Activated T-helper 1 cell treated with anti-CD3 and anti-CD28 coated beads, Interleukin-12 subunit alpha, Interleukin-12 subunit beta, Interleukin-2, Interleukin-4 antibody, amounts not matched to agents 30 ng/mL and 10 ng/mL and 1 ng/mL, durations not matched to agents 14 hours and 24 hours and 36 hours (primary cell): ENCODE measurements at regions of chr10 and their contacts with region 1.

Region 1: DNA sequence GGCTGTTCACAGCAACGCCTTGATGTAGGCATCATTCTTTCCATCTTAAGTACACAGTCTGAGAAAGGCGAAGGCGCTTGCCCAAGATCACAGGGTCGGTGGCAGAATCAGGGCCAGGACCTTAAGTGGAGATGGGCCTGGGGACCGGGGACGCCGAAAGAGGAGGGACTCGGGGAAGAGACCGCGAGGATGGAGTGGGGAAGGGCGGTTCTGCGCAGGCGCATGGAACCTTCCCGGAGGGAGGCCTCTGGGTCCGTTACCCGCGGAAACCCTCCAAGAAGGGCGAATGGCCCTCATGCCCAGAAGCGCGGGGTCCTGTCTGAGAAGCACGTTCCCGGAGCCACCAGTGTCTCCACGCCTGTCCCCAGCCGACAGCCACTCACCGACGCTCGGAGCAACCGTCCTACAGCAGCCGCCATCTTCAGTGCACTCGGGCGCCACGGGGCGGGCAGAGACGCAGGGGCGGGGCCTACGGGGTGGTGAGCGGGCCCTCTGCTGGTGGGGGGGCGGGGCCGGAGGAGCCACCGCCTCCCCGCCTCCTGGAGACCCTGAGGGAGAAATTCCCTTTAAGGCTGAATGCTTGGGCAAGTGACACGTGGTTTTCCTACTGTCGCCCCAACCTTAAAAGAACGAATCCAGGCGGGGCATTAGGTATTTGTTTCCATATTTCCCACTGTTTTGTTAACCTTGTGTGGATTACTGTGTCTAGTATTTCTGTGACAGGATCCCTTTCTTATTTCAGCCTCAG is at the start of gene PRDX3:
- DNase-seq: peak; percentile 89
- H3K4me3 Mint-ChIP-seq: peak within 1 kb of the TSS; percentile 100
- H3K27ac Mint-ChIP-seq: peak within 1 kb of the TSS; percentile 100
- H3K4me1 Mint-ChIP-seq: peaks cover 30% of the 10 kb centered on the region
- H3K27me3 Mint-ChIP-seq: no peaks in the 10 kb centered on the region
- total RNA-seq, gene PRDX3: 158 and 163 TPM in 2 replicates

Region 2: DNA sequence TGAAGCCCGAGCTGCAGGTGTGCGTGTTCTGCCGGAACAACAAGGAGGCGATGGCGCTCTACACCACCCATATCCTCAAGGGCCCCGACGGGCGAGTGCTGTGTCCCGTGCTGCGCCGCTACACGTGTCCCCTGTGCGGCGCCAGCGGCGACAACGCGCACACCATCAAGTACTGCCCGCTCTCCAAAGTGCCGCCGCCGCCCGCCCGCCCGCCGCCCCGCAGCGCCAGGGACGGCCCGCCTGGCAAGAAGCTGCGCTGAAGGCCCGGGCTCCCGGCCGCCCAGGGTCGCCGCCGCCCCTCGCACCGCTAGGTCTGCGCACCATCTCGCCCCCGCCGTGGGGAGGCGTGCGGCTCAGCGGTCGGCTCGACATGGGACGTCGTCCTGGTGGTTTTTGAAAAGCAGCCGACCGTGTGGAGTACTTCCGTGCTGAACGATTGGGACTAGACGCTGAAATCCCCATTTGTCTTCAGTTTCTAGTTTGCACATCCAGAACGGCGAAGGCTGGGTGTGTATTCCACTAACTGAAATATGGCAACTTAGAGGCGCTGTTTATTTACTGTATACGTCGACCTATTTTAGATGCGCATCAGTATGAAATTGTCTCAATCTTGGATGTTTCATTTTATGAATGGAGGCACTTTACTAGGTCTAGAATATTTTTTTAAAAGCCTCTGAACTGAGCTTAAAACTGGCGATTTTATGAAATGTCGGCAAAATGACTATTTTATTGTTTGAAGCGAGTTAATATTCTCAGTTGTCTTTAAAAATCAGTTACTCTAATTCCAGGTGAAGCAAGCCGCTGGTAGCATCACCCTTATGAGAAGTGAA is 147.9 kb before region 1 on chr10:
- intact Hi-C with region 1: loop called (anchors 2 kb)
- DNase-seq: peak; percentile 39
- H3K4me3 Mint-ChIP-seq: peak overlapping the region; percentile 73
- H3K27ac Mint-ChIP-seq: peak overlapping the region; percentile 40
- H3K4me1 Mint-ChIP-seq: peaks cover 25% of the 10 kb centered on the region
- H3K27me3 Mint-ChIP-seq: peaks cover 7% of the 10 kb centered on the region

Region 3: GRCh38 chr10:119103903-119104652 is 74.5 kb before region 1 on chr10 and contains the start of gene DENND10:
- intact Hi-C with region 1: loop called (anchors 1 kb)
- DNase-seq: peak; percentile 68
- H3K4me3 Mint-ChIP-seq: peak within 1 kb of the TSS; percentile 87
- H3K27ac Mint-ChIP-seq: peak within 1 kb of the TSS; percentile 58
- H3K4me1 Mint-ChIP-seq: peaks cover 22% of the 10 kb centered on the region
- H3K27me3 Mint-ChIP-seq: no peaks in the 10 kb centered on the region
- total RNA-seq, gene DENND10: 20.1 and 25.4 TPM in 2 replicates

Region 4: GRCh38 chr10:119165171-119166110 is 13.1 kb before region 1 on chr10 and contains the start of gene SFXN4:
- intact Hi-C with region 1: loop called (anchors 1 kb)
- DNase-seq: peak; percentile 82
- H3K4me3 Mint-ChIP-seq: peak within 1 kb of the TSS; percentile 91
- H3K27ac Mint-ChIP-seq: peak within 1 kb of the TSS; percentile 94
- H3K4me1 Mint-ChIP-seq: peaks cover 45% of the 10 kb centered on the region
- H3K27me3 Mint-ChIP-seq: no peaks in the 10 kb centered on the region
- total RNA-seq, gene SFXN4: 58.2 and 58.7 TPM in 2 replicates

Region 5: DNA sequence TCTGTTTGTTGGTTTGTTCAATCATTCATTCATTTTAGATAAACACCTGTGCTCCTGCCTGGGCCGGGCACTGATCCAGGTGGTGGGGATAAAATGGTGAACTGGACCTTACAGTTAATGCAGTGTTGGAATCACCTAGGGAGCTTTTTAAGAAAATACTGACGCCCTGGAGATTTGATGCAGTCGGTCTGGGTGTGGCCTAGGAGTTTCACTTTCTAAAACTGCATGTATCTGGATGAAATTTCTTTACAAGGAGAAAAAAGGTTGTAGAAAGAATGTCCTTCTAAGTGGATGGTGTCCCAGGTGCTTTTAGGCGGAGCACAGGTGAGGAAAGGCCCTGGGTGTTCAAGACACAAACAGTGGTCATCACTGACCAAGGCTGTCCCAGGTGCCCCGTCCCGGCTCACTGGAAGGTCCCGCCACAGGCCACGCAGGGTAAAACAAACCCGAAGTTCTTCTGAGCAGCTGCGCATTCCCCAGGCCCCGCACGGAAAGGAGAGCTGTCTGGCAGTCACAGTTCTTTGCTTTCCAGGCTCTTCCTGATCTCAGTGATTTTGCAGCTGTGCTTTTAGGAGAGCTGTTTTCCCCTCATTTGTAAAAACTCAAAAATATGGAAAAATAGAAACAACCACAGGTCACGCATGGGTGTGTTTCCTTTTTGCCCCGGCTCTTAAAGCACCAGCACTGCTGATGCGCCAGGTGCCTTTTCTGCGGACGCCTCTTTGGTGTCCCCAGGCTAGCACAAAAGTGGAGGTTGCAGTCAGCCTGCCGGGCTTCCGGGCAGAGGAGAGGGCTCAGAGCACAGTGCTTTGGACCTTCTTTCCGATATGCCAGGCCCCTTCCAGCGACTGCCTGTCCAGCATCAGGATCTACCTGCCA is 190.7 kb after region 1 on chr10:
- intact Hi-C with region 1: no loop called
- DNase-seq: no peak
- H3K4me3 Mint-ChIP-seq: no peak overlapping the region
- H3K27ac Mint-ChIP-seq: peak overlapping the region; percentile 16
- H3K4me1 Mint-ChIP-seq: peaks cover 32% of the 10 kb centered on the region
- H3K27me3 Mint-ChIP-seq: no peaks in the 10 kb centered on the region

Region 6: DNA sequence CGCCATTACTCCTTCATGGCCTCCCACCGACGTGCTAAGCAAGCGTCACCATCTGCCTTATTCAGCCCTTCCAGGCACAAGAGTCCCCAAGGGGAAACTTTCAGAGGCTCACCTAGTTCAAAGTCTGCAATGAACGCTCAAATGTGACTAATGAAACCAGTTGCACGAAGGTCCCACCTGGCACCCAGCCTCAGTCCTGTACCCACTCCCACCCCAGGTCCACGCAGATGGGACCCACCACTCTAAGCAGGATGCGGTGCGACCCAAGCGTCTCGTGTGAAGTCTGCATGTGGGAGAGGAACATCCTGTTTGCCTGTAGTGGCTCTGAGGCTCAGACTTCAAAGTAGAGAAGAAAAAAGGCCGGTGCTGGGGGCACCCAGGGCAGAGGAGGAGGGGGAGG is 323.7 kb after region 1 on chr10:
- intact Hi-C with region 1: loop called (anchors 5 kb)
- DNase-seq: peak; percentile 71
- H3K4me3 Mint-ChIP-seq: peak overlapping the region; percentile 70
- H3K27ac Mint-ChIP-seq: peak overlapping the region; percentile 94
- H3K4me1 Mint-ChIP-seq: peaks cover 90% of the 10 kb centered on the region
- H3K27me3 Mint-ChIP-seq: no peaks in the 10 kb centered on the region